ENCODE measurements at regions of chr10 and their contacts with region 1.

Region 1: DNA sequence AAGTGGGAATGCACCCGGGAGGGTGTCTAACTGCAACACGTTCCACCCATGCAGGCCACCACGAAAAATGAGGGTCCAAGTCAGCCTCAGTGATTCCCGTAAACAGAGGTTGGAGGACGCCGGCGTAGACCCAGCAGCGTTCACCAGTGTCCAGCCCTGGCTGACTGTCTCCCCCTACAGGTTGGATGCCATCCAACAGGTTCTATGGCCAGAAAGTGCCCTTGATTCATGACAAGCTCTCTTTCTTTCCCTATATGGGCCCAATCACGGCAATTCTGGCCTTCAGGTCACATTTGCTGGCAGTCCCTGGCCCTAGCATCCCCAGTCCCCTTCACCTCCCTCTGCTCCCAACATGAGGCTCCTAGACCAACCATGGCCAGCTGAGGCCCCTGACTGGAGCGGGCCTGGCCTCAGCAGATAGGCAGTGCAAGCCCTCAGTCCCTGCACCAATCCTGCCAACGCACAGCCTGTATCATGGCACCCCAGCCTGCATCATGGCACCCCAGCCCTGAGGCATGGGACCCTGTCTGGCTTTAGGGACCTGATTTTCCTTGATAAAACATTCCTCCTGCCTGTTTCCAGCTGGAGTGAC is 227.4 kb downstream of the GRID1 start:
- H3K4me3 ChIP-seq: no peak overlapping the region
- H3K27ac ChIP-seq: no peak overlapping the region
- H3K4me1 ChIP-seq: no peaks in the 10 kb centered on the region
- CTCF ChIP-seq: peak; percentile 36; the same call in 1 of the 2 replicates

Region 2: DNA sequence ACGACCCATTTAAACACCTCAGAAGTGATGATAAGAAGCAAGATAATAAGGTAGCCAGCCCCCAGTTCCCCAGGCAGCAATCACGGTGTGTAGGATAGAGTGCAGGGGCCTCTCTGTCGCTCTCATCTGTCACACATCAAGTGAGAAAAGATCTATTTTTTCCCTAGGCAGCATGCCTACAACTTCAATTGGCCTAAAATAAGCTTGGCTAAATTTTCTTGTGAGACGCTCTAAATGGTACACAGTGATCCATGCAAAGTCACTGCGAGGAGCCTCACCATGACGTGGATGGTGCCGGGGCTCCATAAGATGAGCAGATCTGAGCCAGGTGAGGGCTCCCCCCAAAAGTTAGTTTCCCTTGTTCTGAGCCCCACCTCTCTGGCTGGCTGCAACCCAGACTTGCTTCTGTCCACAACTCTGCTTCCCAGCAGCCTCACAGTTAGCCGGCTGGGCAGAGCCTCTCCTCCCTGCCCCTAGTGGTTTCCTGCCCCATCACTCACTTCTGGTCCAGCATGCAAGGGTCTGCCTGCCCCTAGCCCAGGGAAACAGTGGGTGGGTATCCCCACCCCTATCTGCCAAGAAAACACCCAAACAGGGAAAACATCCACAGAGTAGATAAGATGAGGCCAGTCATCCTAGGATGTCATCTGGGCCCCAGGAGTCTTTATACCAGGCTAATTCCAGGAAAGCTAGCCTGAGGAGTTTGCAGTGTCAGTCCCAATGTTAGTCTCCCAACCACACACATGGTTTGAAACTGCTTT is 114.7 kb before region 1 on chr10:
- CTCF ChIA-PET with region 1: no interaction called
- POLR2A ChIA-PET with region 1: no interaction called
- H3K4me3 ChIP-seq: no peak overlapping the region
- H3K27ac ChIP-seq: no peak overlapping the region
- H3K4me1 ChIP-seq: no peaks in the 10 kb centered on the region
- CTCF ChIP-seq: no peak

Region 3: DNA sequence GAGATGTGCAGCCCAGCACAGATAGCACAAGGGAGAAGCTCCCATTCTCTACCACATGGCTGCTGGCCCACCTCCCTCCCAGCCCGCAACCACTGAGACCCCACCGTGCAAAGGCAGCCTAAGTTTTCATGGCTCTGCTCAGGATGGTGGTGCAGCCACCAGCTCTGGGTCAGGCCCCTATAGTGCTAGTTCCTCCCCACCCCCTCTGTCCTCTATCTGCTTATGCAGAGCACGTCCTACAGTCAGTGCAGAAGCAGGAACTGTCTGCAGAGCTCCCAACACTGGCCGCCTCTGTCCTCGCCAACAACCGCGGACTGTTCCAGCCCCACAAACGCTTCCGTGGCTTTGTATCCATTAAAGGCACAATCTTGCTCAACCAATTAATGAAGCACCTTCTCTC is 51.4 kb before region 1 on chr10:
- CTCF ChIA-PET with region 1: no interaction called
- POLR2A ChIA-PET with region 1: no interaction called
- H3K4me3 ChIP-seq: no peak overlapping the region
- H3K27ac ChIP-seq: no peak overlapping the region
- H3K4me1 ChIP-seq: no peaks in the 10 kb centered on the region
- CTCF ChIP-seq: no peak

Region 4: DNA sequence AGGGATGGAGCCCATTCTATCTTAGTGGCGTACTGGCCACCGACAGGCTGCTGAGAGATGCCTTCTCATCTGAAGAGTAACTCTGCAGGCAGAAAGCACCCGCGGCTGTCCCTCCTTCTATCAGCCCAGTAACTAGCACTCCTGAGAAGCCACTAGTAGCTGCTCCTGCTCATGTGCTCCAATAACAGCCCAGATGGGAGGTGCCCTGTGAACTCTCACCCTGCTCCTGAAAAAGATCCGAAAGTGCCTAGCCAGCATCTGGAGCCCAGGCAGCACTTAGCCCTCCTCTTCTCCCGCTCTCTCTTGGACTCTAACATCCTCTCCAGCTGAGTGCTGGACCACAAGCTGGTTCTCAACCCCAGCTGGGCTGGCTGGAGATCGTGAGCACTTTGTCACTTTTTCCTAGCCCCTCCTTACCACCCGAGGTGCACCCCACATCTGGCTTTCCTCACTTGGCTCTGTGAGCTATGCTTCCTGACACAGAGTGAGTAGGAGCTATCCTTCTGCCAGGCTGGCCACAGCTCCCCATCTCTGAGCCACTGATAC is 11.8 kb before region 1 on chr10:
- CTCF ChIA-PET with region 1: interaction called, 11 read pairs
- POLR2A ChIA-PET with region 1: no interaction called
- H3K4me3 ChIP-seq: no peak overlapping the region
- H3K27ac ChIP-seq: no peak overlapping the region
- H3K4me1 ChIP-seq: 0 out of 2 replicates have a peak, but pooled peaks cover 6% of the 10 kb centered on the region
- CTCF ChIP-seq: no peak